Left lung (tissue), 14 donors: ENCODE measurements at regions of chr1 and their contacts with region 1.

Region 1: DNA sequence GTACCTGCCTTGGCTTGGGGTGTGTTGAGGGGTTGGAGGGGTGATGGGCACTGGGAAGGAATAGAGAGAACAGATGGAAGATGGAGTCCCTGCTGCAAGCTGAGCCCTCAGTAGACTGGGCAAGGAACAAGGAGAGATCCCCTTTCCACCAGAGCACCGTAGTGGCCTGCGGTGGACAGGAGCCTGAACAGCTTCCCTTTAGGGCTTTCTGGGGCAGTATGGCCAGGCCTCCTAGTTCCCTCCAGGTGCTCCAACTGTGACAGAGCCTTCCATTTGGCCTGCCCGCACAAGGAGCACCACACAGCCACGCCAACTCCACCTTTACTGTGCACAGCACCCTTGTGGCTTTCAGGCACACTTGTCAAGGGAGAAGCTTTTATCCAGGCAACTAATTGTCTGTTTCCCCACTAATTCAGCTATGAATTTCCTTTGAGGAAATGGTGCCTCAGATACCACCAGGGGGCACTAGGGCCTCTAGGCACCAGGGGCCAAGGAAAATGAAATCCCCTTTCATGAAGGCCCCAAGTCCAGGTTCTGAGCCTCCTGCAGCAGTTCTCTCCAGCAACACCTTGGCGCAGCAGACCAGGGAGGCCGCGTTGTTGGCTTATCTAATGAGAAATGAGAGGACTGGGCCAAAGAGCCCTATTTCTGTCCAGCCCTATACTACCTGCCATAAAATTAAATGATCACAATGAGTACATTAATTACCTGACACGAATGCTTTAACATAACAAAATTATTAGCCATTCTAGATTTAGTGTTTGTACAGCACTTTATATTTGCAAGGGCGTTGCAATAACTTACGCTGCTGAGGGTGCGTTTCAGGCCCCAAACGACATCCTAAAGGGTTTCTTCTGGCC is 23.1 kb upstream of the ERI3 start:
- DNase-seq: peak in 1 of 4 donors; percentile 65
- ATAC-seq: peak; percentile 88
- H3K4me3 ChIP-seq: no peak overlapping the region
- H3K27ac ChIP-seq: no peak overlapping the region
- H3K4me1 ChIP-seq: no peaks in the 10 kb centered on the region
- H3K27me3 ChIP-seq: no peaks in the 10 kb centered on the region
- CTCF ChIP-seq: peak; percentile 67 to 68

Region 2: GRCh38 chr1:44318097-44319088 is 59.8 kb before region 1 on chr1:
- intact Hi-C with region 1: no loop called
- DNase-seq: peak in 2 of 4 donors; percentile 9 to 11
- ATAC-seq: peak; percentile 57
- H3K4me3 ChIP-seq: no peak overlapping the region
- H3K27ac ChIP-seq: no peak overlapping the region
- H3K4me1 ChIP-seq: no peaks in the 10 kb centered on the region
- H3K27me3 ChIP-seq: no peaks in the 10 kb centered on the region
- CTCF ChIP-seq: peak; percentile 86 to 87

Region 3: GRCh38 chr1:44594871-44595746 is 217.0 kb after region 1 on chr1:
- intact Hi-C with region 1: loop called in 1 of 2 experiments (anchors 5 kb)
- DNase-seq: peak; percentile 40 to 98 (median 73)
- ATAC-seq: peak; percentile 99
- H3K4me3 ChIP-seq: no peak overlapping the region
- H3K27ac ChIP-seq: no peak overlapping the region
- H3K4me1 ChIP-seq: no peaks in the 10 kb centered on the region
- H3K27me3 ChIP-seq: no peaks in the 10 kb centered on the region
- CTCF ChIP-seq: peak; percentile 97 to 99